Uterus (tissue), 4 donors: ENCODE measurements at regions of chr10 and their contacts with region 1.

Region 1: DNA sequence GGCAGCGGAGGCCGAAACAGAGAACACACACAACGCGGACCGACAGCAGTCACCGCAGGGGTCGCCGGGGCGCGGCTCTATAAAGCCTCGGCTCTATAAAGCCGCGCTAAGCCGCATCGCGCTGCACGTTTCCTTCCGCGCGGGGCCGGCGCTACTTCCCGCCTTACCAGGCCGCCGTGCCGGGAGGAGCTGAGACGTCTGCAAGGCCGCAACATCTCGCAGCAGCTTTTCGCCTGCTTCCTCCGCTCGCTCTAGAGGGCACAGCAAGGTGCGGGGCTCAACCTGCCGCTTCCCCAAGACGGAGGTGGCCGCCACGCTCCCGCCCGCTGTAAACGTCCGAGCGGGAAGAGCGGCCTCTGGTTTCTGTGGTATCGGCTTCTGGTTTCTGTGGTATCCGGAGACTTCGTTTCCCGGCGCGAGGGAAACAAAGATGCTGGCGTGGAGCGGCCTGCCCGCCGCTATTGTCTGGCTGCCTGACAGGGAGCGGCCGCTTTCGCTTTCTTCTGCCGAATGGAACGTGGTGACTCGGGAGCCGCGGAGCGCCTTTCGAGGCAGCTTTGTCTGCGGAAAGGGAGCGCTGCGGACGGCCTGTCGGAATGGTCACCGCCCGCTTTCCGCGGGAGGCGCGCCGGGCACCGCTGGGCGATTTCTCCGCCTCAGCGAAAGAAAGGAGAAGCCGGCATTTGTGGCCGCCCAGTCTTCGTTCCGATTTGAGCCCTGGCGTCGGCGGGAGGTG is 91.8 kb downstream of the SPAG6 start:
- DNase-seq: peak; percentile 90 to 91
- H3K4me3 ChIP-seq: peak overlapping the region; percentile 67 to 81
- H3K27ac ChIP-seq: peak overlapping the region; percentile 96 to 98
- H3K4me1 ChIP-seq: peaks cover 0 to 9% of the 10 kb centered on the region in 2 donors
- H3K27me3 ChIP-seq: no peaks in the 10 kb centered on the region
- CTCF ChIP-seq: peak in 1 of 4 experiments; percentile 6
- POLR2A ChIP-seq: peak; percentile 75 to 88

Region 2: DNA sequence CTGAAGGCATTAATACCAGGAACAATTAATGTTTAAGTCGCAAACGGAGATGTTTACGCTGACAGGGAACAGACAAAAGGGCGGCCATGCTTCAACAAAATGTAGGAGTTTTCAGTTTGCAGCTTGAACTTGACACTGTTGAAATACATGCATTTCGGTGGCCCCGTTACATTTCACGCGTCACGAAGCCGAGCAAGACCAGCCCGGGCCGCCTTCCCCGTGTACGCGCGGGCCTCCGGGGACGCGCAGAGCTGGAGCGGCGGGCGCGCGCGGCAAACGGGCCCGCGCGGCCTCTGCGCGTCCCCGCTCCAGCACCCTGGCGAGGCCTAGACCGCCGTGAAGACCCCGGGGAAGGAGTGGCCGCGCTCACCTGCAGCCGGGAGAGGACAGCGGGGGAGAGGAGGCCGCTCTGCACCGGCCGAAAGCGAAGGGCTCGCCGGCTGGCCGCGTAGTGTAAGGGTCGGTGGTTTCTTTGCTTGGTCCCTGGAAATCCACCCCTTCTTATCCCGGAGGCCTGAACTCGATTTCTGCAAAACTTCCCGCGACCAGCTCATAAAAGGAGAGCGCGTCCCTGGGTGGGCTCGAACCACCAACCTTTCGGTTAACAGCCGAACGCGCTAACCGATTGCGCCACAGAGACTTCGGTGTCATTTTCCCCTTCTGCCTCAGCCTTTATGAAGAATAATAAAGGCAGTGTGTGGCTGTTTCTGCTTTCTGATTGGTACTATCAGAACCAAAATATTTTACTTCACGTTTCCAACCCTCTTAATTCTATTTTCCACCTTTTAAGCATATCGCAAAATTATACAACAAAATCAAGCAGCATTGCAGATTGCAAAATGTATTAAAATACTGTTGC is 207.9 kb before region 1 on chr10:
- intact Hi-C with region 1: loop called (anchors 5 kb)
- DNase-seq: peak; percentile 90 to 92
- H3K4me3 ChIP-seq: peak overlapping the region; percentile 51 to 71
- H3K27ac ChIP-seq: peak overlapping the region; percentile 96 to 98
- H3K4me1 ChIP-seq: no peaks in the 10 kb centered on the region
- H3K27me3 ChIP-seq: no peaks in the 10 kb centered on the region
- CTCF ChIP-seq: no peak
- POLR2A ChIP-seq: peak; percentile 41 to 51

Region 3: GRCh38 chr10:22259280-22259679 is 177.8 kb before region 1 on chr10:
- intact Hi-C with region 1: no loop called
- DNase-seq: no peak
- H3K4me3 ChIP-seq: no peak overlapping the region
- H3K27ac ChIP-seq: no peak overlapping the region
- H3K4me1 ChIP-seq: no peaks in the 10 kb centered on the region
- H3K27me3 ChIP-seq: no peaks in the 10 kb centered on the region
- CTCF ChIP-seq: no peak
- POLR2A ChIP-seq: no peak

Region 4: DNA sequence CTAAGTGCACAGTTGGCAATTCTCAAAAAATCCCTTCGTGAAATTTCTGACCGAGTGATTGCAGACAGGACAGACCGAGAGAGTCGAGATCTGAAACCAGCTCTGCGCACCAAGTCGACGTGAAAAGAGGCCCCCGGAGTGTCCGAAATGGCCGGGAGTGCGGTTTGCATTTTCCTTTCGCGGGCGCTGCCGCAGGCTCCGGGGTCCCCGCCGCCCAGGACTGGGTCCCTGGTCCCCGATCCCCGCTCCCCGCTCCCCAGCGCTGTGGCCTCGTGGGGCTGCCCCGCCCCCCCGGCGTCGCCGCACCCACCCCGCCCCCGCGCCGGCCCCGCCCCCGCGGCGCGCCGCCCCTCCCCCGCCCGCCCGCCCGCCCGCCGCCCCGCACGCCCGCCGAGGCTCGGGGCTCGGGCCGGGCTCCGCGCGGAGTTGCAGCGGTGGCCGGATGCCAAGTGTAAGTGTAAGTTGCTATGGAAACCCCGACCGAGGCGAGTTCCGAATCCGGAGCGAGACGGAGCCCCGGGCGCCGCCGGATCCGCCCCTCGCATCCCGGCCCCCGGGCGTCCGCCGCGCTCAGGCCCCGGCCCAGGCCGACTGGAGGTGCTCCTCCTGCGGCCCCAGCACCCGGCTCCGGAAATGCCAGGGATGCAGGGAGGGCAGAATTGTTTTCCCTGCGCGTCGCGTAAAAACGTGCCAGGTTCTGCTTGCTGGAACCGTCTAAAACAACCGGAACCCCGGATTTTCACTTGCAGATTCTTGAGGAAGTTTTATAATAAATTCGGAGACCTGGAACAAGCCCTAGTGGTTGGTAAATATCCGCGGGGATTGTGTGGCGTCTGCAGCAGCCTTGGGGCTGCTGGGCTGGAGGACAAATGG is 111.5 kb before region 1 on chr10:
- intact Hi-C with region 1: loop called (anchors 10 kb)
- DNase-seq: peak; percentile 78 to 79
- H3K4me3 ChIP-seq: peak overlapping the region; percentile 44 to 53
- H3K27ac ChIP-seq: peak overlapping the region; percentile 67 to 80
- H3K4me1 ChIP-seq: no peaks in the 10 kb centered on the region
- H3K27me3 ChIP-seq: no peaks in the 10 kb centered on the region
- CTCF ChIP-seq: no peak
- POLR2A ChIP-seq: no peak